Activated B cell treated with CpG ODN at 0.5 μM for 24 hours (primary cell): ENCODE measurements at regions of chr19 and their contacts with region 1.

Region 1: GRCh38 chr19:3163230-3163886 is 15.2 kb upstream of the S1PR4 start:
- DNase-seq: peak; percentile 56
- ATAC-seq: peak; percentile 96
- H3K4me3 Mint-ChIP-seq: peak overlapping the region; percentile 12
- H3K27ac Mint-ChIP-seq: no peak overlapping the region
- H3K4me1 Mint-ChIP-seq: peaks cover 24% of the 10 kb centered on the region
- H3K27me3 Mint-ChIP-seq: no peaks in the 10 kb centered on the region
- CTCF ChIP-seq: peak; percentile 85

Region 2: GRCh38 chr19:2887391-2887914 is 275.9 kb before region 1 on chr19:
- CTCF ChIA-PET with region 1: no interaction called
- POLR2A ChIA-PET with region 1: no interaction called
- intact Hi-C with region 1: loop called (anchors 1 kb)
- DNase-seq: peak; percentile 20
- ATAC-seq: peak; percentile 65
- H3K4me3 Mint-ChIP-seq: peak overlapping the region; percentile 24
- H3K27ac Mint-ChIP-seq: peak overlapping the region; percentile 81
- H3K4me1 Mint-ChIP-seq: peaks cover 20% of the 10 kb centered on the region
- H3K27me3 Mint-ChIP-seq: no peaks in the 10 kb centered on the region
- CTCF ChIP-seq: no peak

Region 3: GRCh38 chr19:3062168-3063102 is 100.9 kb before region 1 on chr19 and contains the start of gene TLE5:
- CTCF ChIA-PET with region 1: no interaction called
- POLR2A ChIA-PET with region 1: no interaction called
- intact Hi-C with region 1: no loop called
- DNase-seq: peak; percentile 76
- ATAC-seq: peak; percentile 43
- H3K4me3 Mint-ChIP-seq: peak within 1 kb of the TSS; percentile 84
- H3K27ac Mint-ChIP-seq: peak within 1 kb of the TSS; percentile 89
- H3K4me1 Mint-ChIP-seq: peaks cover 65% of the 10 kb centered on the region
- H3K27me3 Mint-ChIP-seq: no peaks in the 10 kb centered on the region
- CTCF ChIP-seq: no peak
- total RNA-seq, gene TLE5: 323 TPM in 2 replicates

Region 4: GRCh38 chr19:3075895-3076431 is 87.4 kb before region 1 on chr19:
- CTCF ChIA-PET with region 1: interaction called, 7 read pairs
- POLR2A ChIA-PET with region 1: interaction called, 3 read pairs
- intact Hi-C with region 1: loop called (anchors 1 kb)
- DNase-seq: peak; percentile 79
- ATAC-seq: peak; percentile 97
- H3K4me3 Mint-ChIP-seq: no peak overlapping the region
- H3K27ac Mint-ChIP-seq: no peak overlapping the region
- H3K4me1 Mint-ChIP-seq: peaks cover 10% of the 10 kb centered on the region
- H3K27me3 Mint-ChIP-seq: no peaks in the 10 kb centered on the region
- CTCF ChIP-seq: peak; percentile 63

Region 5: GRCh38 chr19:3100865-3101730 is 62.3 kb before region 1 on chr19:
- CTCF ChIA-PET with region 1: interaction called, 10 read pairs
- POLR2A ChIA-PET with region 1: no interaction called
- intact Hi-C with region 1: no loop called
- DNase-seq: no peak
- ATAC-seq: no peak
- H3K4me3 Mint-ChIP-seq: no peak overlapping the region
- H3K27ac Mint-ChIP-seq: no peak overlapping the region
- H3K4me1 Mint-ChIP-seq: peaks cover 29% of the 10 kb centered on the region
- H3K27me3 Mint-ChIP-seq: no peaks in the 10 kb centered on the region
- CTCF ChIP-seq: no peak

Region 6: DNA sequence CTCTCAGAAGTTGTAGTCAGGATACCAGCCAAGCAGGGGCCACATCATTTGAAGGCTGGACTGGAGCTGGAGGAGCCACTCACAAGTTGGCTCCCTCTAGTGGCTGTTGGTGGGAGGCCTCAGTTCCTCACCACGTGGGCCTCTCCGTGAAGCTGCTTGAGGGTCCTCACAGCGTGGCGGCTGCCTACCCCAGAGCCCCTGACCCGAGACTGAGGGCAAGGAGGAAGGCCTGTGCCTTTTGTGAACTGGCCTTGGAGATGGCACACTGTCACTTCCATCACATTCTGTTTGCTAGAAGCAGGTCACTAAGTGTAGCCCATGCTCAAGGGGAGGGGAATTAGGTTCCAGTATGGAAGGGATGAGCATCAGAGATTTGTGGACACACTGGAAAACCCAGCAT is 54.6 kb before region 1 on chr19:
- CTCF ChIA-PET with region 1: interaction called, 10 read pairs
- POLR2A ChIA-PET with region 1: no interaction called
- intact Hi-C with region 1: loop called (anchors 1 kb)
- DNase-seq: peak; percentile 61
- ATAC-seq: peak; percentile 76
- H3K4me3 Mint-ChIP-seq: no peak overlapping the region
- H3K27ac Mint-ChIP-seq: no peak overlapping the region
- H3K4me1 Mint-ChIP-seq: peaks cover 11% of the 10 kb centered on the region
- H3K27me3 Mint-ChIP-seq: no peaks in the 10 kb centered on the region
- CTCF ChIP-seq: no peak

Region 7: DNA sequence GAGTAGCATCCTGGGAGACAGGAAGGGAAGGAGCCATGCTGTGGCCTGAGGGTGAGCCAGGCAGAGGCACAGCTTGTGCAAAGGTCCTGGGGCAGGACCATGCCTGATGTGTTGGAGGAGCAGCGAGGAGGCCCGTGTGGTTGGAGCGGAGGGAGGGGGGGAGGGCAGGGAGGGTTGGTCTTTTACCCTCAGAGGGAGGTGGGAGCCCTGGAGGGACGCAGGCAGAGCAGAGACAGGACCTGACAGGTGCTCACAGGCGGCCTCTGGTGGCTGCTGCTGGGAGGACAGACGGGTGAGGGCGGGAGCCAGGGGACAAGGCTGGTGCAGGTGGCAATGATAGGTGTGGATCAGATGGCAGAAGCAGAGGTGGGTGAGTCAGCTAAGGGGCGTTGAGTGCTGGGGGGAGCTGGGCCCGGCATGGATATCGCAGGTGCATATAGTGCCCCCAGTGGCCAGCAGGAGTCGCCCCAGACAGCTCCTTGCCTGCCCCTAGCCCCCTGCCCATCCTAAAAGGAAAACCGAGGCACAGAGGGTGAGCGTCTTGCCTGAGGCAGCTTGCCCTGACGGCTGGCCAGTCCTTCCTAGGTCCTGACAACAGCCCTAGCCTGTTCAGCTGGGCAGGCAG is 37.3 kb before region 1 on chr19:
- CTCF ChIA-PET with region 1: interaction called, 32 read pairs
- POLR2A ChIA-PET with region 1: interaction called, 5 read pairs
- intact Hi-C with region 1: loop called (anchors 1 kb)
- DNase-seq: peak; percentile 61
- ATAC-seq: peak; percentile 70
- H3K4me3 Mint-ChIP-seq: no peak overlapping the region
- H3K27ac Mint-ChIP-seq: no peak overlapping the region
- H3K4me1 Mint-ChIP-seq: peaks cover 23% of the 10 kb centered on the region
- H3K27me3 Mint-ChIP-seq: peaks cover 2% of the 10 kb centered on the region
- CTCF ChIP-seq: peak; percentile 38

Region 8: GRCh38 chr19:3146677-3147100 is 16.7 kb before region 1 on chr19:
- CTCF ChIA-PET with region 1: interaction called, 5 read pairs
- POLR2A ChIA-PET with region 1: interaction called, 3 read pairs
- intact Hi-C with region 1: loop called (anchors 1 kb)
- DNase-seq: peak; percentile 65
- ATAC-seq: peak; percentile 55
- H3K4me3 Mint-ChIP-seq: no peak overlapping the region
- H3K27ac Mint-ChIP-seq: no peak overlapping the region
- H3K4me1 Mint-ChIP-seq: peaks cover 23% of the 10 kb centered on the region
- H3K27me3 Mint-ChIP-seq: peaks cover 4% of the 10 kb centered on the region
- CTCF ChIP-seq: no peak

Region 9: DNA sequence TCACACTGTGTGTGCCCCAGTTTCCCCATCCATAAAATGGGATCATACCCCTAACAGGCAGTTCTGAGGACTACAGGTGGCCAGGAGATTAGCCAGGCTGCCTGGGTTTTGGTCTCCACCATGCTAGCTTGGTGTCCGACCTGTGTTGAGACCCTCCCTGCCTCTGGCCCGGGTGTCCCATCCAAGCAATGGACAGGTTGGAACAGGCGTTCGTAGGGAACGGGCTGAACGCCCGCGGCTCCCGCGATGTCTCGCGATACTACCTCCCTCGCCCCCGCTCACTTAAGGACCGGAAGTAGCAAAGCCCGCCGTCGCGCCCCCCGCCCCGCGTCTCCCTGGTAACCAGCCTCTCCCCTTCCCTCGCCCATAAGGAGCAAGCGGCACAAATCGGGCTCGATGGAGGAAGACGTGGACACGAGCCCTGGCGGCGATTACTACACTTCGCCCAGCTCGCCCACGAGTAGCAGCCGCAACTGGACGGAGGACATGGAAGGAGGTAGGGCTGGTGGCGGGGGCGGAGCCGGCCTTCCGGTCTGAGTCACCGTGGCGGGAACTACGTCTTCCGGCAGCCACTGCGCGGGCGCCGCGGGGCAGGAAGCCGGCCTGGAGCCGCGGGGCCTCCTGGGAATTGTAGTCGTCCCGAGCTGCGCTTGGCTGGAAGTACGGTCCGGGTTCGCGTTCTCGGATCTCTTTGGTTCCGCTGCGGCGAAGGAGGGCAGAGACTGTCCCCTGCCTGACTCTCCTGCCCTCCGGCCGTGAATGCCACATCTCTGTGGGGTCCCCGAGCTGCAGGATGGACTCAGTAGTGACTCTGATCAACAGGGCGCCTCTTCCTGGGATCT is 271.6 kb after region 1 on chr19:
- CTCF ChIA-PET with region 1: no interaction called
- POLR2A ChIA-PET with region 1: no interaction called
- intact Hi-C with region 1: no loop called
- DNase-seq: peak; percentile 98
- ATAC-seq: peak; percentile 92
- H3K4me3 Mint-ChIP-seq: peak overlapping the region; percentile 99
- H3K27ac Mint-ChIP-seq: peak overlapping the region; percentile 99
- H3K4me1 Mint-ChIP-seq: peaks cover 17% of the 10 kb centered on the region
- H3K27me3 Mint-ChIP-seq: no peaks in the 10 kb centered on the region
- CTCF ChIP-seq: no peak